ENCODE measurements at regions of chr1 and their contacts with region 1.

Region 1: DNA sequence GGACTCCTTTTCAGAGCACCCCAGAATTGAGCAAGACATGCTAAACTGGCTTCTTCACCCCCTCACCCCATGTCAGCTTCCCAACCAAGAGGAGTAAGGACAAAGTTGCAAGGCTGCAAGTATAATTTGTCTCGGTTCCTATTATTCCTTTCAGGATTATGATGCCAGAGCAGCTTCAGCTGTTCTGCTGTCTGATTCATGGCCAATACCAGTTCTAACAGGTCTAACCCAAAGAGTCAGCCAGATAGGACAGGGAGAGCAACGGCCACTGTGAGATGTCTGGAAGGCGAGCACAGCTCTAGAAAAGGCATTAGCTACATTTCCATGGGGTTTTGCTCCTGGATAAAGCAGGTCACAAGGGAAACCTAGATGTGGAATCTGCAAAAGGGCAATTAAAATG is 53.3 kb upstream of the HOOK1 start:
- DNase-seq: no peak
- ATAC-seq: no peak

Region 2: DNA sequence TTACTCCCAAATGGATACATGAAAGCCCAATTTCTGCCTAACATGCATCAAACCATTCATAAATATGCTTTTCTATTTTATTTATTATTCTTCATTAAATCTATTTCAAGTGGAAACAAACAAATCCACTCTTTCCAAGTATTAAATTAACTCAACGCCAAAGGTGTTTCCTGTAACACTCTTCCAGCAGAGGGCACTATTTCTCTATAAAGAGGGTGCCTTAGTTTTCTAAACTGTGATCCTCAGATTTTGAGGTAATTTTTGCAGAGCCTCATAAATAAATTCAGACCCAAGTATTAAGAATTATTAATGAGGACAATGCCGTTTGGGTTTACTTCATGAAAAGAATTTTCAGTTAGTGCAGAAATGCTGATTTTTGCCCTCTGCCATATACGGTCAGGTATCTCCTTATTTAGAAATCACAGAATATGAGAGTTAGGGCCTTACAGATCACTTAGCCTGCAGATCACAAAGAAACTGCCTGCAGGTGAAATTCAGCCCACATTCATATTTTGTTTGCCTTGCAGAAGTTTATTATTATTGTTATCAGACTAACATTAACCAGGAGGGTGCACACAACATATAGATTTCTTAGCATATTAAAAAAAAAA is 1021.5 kb before region 1 on chr1:
- intact Hi-C with region 1: loop called in 1 of 2 experiments (anchors 5 kb)
- DNase-seq: no peak
- ATAC-seq: peak; percentile 59

Region 3: GRCh38 chr1:60068393-60069045 is 307.1 kb after region 1 on chr1:
- intact Hi-C with region 1: no loop called
- DNase-seq: no peak
- ATAC-seq: no peak

Measured in left colon (tissue), 2 donors.